ENCODE measurements at regions of chr7 and their contacts with region 1.

Region 1: GRCh38 chr7:130114374-130115135 is 44.2 kb downstream of the KLHDC10 start:
- DNase-seq: no peak
- ATAC-seq: peak; percentile 87
- H3K4me3 ChIP-seq: no peak overlapping the region
- H3K27ac ChIP-seq: peak overlapping the region; percentile 59
- H3K4me1 ChIP-seq: peaks cover 32% of the 10 kb centered on the region
- H3K27me3 ChIP-seq: no peaks in the 10 kb centered on the region
- CTCF ChIP-seq: no peak
- EP300 ChIP-seq: no peak
- POLR2A ChIP-seq: no peak
- RAD21 ChIP-seq: no peak

Region 2: GRCh38 chr7:130102588-130102987 is 12.0 kb before region 1 on chr7:
- CTCF ChIA-PET with region 1: interaction called, 4 read pairs
- POLR2A ChIA-PET with region 1: interaction called, 12 read pairs
- RAD21 ChIA-PET with region 1: no interaction called
- SMC1A ChIA-PET with region 1: interaction called, 6 read pairs
- in situ Hi-C with region 1: no loop called
- intact Hi-C with region 1: no loop called
- DNase-seq: no peak
- ATAC-seq: no peak
- H3K4me3 ChIP-seq: no peak overlapping the region
- H3K27ac ChIP-seq: 0 out of 2 replicates have a peak overlapping the region, but pooled peaks have one; percentile 24
- H3K4me1 ChIP-seq: peaks cover 15% of the 10 kb centered on the region
- H3K27me3 ChIP-seq: no peaks in the 10 kb centered on the region
- CTCF ChIP-seq: no peak
- EP300 ChIP-seq: no peak
- POLR2A ChIP-seq: no peak
- RAD21 ChIP-seq: no peak

Measured in GM12878 (cell line).